ENCODE measurements at regions of chr9 and their contacts with region 1.

Region 1: DNA sequence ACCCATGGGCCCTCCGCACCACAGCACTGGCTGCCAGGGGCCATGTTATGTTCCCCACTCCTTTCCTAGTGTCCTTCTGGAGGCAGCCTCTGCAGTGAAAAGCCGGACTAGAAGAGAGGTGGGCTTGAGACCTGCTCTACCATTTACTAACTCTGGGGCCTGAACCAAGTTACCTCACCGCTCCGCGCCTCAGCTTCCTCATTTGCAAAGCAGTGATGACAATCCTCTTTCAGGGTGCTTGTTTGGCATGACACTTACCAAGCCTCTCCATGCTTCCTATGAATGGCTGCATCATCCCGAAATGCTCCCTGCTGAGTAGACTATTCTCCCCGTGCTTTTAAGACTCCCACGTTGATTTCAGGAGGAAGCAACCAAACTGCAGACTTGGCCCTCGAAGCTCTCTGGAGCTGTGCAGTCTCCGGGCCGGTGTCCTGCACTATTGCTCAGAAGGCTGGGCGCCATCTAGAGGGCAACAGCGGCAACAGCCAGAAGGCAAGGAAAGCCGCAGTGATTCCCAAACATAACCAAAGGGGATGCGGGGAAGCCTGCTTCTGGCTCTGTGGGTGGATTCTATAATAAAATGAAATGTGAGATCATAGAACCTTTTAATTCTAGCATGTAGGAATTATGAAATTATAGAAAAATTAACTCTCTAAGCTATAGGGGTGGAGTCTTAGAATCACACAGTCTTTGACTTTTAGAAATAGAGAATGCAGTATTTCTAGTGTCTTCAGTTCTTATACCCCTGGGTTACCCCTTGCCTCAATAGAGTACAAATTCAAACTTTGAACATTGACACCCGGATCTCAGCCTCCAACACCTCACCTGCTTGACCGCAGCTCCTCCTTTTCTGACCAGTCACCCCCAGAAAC is 599.8 kb upstream of the BRINP1 start:
- DNase-seq: peak; percentile 72
- H3K4me3 Mint-ChIP-seq: no peak overlapping the region
- H3K27ac Mint-ChIP-seq: no peak overlapping the region
- H3K4me1 Mint-ChIP-seq: peaks cover 14% of the 10 kb centered on the region
- H3K27me3 Mint-ChIP-seq: no peaks in the 10 kb centered on the region
- CTCF ChIP-seq: peak; percentile 88

Region 2: DNA sequence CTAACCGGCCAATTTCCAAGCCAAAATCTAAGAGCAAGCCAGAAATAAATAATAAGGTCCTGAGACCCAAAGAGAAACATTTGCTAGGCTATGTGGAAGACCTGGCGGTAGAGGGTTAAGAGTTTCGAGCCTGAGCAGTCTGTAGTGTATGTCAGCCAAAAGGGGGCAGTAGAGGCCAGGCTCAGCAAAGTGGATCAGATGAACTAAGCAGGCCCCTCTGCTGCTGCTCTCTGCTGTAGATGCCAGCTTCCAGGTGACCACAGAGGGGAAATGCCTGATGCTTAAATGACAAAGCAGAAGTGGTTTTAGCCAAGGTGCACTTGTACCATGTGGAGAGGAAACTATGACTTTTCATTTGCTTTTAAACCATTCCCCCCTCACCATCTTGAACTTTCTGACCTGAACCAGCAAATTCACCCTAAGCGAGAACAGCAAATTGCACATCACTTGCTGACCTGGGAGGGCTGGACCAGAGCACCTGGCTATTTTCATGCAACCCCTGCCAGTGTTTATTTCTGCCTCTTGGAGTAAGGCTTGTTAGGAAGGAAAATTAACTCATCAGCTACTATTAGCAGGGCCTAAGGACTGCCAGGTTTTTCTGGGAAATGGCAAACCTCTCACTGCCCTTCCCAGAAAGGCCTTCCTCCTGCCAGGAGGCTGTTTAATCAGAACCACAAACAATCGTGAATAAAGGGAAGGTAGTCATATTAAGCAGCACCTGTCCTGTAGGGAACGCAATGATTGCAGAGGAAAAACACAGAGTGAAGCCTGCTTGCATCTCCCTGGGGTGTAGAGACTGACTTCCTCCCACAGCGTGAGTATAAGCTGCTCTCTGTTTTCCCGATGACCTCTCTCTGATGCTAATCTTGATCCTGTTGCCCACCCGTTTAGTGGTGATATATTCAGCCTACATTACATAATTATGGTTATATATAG is 1446.7 kb before region 1 on chr9:
- CTCF ChIA-PET with region 1: no interaction called
- POLR2A ChIA-PET with region 1: no interaction called
- intact Hi-C with region 1: loop called (anchors 10 kb)
- DNase-seq: peak; percentile 73
- H3K4me3 Mint-ChIP-seq: no peak overlapping the region
- H3K27ac Mint-ChIP-seq: no peak overlapping the region
- H3K4me1 Mint-ChIP-seq: no peaks in the 10 kb centered on the region
- H3K27me3 Mint-ChIP-seq: no peaks in the 10 kb centered on the region
- CTCF ChIP-seq: peak; percentile 77

Region 3: GRCh38 chr9:119398350-119398749 is 570.7 kb before region 1 on chr9:
- CTCF ChIA-PET with region 1: no interaction called
- POLR2A ChIA-PET with region 1: no interaction called
- intact Hi-C with region 1: no loop called
- DNase-seq: no peak
- H3K4me3 Mint-ChIP-seq: no peak overlapping the region
- H3K27ac Mint-ChIP-seq: no peak overlapping the region
- H3K4me1 Mint-ChIP-seq: no peaks in the 10 kb centered on the region
- H3K27me3 Mint-ChIP-seq: no peaks in the 10 kb centered on the region
- CTCF ChIP-seq: no peak

Region 4: GRCh38 chr9:119556129-119556875 is 412.8 kb before region 1 on chr9:
- CTCF ChIA-PET with region 1: interaction called, 34 read pairs
- POLR2A ChIA-PET with region 1: no interaction called
- intact Hi-C with region 1: loop called (anchors 2 kb)
- DNase-seq: peak; percentile 40
- H3K4me3 Mint-ChIP-seq: no peak overlapping the region
- H3K27ac Mint-ChIP-seq: no peak overlapping the region
- H3K4me1 Mint-ChIP-seq: no peaks in the 10 kb centered on the region
- H3K27me3 Mint-ChIP-seq: peaks cover 12% of the 10 kb centered on the region
- CTCF ChIP-seq: peak; percentile 74

Region 5: DNA sequence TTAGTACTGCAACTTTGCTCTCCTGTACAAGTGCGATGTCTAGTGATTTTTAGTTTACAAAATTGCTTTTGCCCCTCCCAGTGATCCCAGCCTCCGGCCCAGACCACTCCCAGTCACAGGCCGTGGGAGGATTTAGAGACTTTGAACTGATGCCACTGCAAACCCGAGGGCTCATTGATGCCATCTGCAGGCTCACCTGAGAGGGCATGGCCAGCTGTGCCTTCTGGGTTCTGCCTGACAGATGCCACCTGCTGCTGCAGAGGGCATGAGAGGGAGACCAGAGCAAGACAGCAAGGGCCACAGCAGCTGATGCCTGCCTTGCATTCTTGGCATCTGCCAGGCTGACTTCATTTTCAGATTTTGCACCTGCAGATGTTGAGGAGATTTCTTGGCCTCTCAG is 17.1 kb after region 1 on chr9:
- CTCF ChIA-PET with region 1: interaction called, 20 read pairs
- POLR2A ChIA-PET with region 1: no interaction called
- intact Hi-C with region 1: no loop called
- DNase-seq: no peak
- H3K4me3 Mint-ChIP-seq: no peak overlapping the region
- H3K27ac Mint-ChIP-seq: no peak overlapping the region
- H3K4me1 Mint-ChIP-seq: no peaks in the 10 kb centered on the region
- H3K27me3 Mint-ChIP-seq: peaks cover 25% of the 10 kb centered on the region
- CTCF ChIP-seq: no peak

Region 6: DNA sequence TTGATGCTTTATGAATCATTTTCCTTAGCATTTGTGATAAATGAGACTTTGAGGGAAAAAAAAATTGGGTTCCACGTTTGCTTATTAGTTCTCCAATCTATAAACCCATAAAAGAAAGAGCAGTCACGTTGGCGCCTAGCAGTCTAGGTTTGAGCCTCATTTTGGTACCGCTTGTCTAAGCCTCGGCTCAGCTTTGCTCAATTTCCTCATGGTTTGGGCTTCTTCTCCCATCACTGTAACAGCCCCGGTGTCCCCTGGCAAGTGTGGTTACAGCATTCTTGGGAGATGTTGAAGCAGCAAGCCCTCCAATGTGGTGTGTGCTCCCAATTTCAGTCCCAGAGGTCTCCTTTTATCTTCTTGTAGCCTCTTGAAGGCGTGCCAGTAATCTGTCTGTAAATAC is 32.5 kb after region 1 on chr9:
- CTCF ChIA-PET with region 1: interaction called, 13 read pairs
- POLR2A ChIA-PET with region 1: no interaction called
- intact Hi-C with region 1: no loop called
- DNase-seq: no peak
- H3K4me3 Mint-ChIP-seq: no peak overlapping the region
- H3K27ac Mint-ChIP-seq: no peak overlapping the region
- H3K4me1 Mint-ChIP-seq: no peaks in the 10 kb centered on the region
- H3K27me3 Mint-ChIP-seq: peaks cover 25% of the 10 kb centered on the region
- CTCF ChIP-seq: no peak

Region 7: GRCh38 chr9:120477521-120478001 is 508.5 kb after region 1 on chr9:
- CTCF ChIA-PET with region 1: no interaction called
- POLR2A ChIA-PET with region 1: no interaction called
- intact Hi-C with region 1: loop called (anchors 2 kb)
- DNase-seq: peak; percentile 97
- H3K4me3 Mint-ChIP-seq: no peak overlapping the region
- H3K27ac Mint-ChIP-seq: no peak overlapping the region
- H3K4me1 Mint-ChIP-seq: peaks cover 23% of the 10 kb centered on the region
- H3K27me3 Mint-ChIP-seq: no peaks in the 10 kb centered on the region
- CTCF ChIP-seq: peak; percentile 82

Measured in MCF 10A (cell line).